ENCODE measurements at regions of chr5 and their contacts with region 1.

Region 1: DNA sequence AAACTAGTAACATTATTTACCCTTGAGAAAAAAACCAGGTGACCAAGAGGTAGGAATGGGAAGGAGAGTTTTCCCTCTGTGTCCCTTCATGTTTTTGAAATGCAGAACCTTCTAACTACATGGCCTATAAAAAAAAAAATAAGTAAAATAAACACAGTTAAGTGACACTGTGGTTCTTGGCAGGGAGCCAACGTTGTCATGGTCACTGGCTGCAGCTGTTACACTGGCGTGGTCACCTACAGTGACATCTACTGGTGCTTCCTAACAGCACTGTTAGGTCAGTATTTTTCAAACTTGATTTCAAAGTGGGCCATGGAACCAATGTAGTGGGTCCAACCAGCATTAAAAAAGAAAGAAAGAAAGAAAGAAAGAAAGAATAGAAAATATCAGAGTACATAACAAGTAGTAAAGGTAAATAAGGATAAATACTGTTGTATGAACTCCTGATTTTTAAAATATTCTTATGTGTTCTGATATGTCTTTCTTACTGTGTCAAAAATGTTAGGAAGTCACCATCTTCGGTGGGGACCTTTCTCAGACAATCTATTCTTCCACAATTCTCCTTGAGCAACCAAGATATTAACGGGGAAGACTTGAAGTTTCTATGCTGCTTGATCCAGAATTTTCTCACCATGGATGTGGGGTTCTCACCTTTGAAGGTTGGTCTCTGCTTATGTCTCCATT is 59.1 kb upstream of the PJA2 start:
- DNase-seq: peak; percentile 88
- ATAC-seq: peak; percentile 95
- H3K4me3 ChIP-seq: no peak overlapping the region
- H3K27ac ChIP-seq: no peak overlapping the region
- H3K4me1 ChIP-seq: peaks cover 7% of the 10 kb centered on the region
- H3K27me3 ChIP-seq: no peaks in the 10 kb centered on the region
- CTCF ChIP-seq: peak; percentile 87
- EP300 ChIP-seq: peak in 1 of 2 experiments; percentile 41; a peak in 1 of 4 replicates
- POLR2A ChIP-seq: no peak
- RAD21 ChIP-seq: peak; percentile 76

Region 2: DNA sequence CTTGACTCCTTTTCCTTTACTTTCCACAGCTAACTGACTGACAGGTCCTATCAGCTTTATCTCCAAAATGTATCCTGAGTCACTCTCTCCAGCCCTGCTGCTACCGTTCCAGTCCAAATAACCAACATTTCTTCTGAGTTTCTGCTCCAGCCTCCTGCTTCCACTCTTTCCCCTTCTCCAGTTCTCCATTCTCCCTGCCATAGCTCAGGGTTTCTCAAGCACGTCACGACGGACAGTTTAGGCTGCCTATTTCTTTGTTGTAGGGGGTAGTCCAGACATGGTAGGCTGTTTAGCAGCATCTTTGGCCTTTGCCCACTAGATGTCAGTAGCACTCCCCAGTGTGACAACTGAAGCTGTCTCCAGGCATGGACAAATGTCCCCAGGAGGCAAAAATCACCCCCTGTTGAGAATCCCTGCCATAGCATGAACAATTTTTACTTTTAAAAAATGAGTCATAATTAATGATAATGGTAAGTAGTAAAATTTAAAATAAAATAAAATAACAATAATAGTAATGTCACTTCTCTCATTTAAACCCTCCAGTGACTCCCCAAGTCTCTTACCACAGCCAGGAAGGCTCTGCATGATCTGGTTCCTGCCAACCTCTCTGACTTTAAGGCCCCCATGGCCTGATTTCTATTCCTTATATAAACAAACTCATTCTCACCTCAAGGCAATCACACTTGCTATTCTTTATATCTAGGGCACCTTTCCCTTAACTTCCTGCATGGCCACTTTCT is 826.5 kb before region 1 on chr5:
- CTCF ChIA-PET with region 1: no interaction called
- POLR2A ChIA-PET with region 1: no interaction called
- in situ Hi-C with region 1: no loop called
- intact Hi-C with region 1: loop called (anchors 5 kb)
- DNase-seq: peak; percentile 53
- ATAC-seq: peak; percentile 100
- H3K4me3 ChIP-seq: 0 out of 6 replicates have a peak overlapping the region, but pooled peaks of 1 of the 3 experiments have one; percentile 35
- H3K27ac ChIP-seq: no peak overlapping the region
- H3K4me1 ChIP-seq: peaks cover 5% of the 10 kb centered on the region; the same call in 1 of the 2 replicates
- H3K27me3 ChIP-seq: 0 out of 5 replicates have a peak, but pooled peaks cover 0 to 4% of the 10 kb centered on the region in 2 experiments
- CTCF ChIP-seq: peak; percentile 88
- EP300 ChIP-seq: no peak
- POLR2A ChIP-seq: no peak
- RAD21 ChIP-seq: peak; percentile 61; the same call in 1 of the 2 replicates

Region 3: GRCh38 chr5:108681079-108681921 is 787.6 kb before region 1 on chr5:
- CTCF ChIA-PET with region 1: interaction called, 5 read pairs
- POLR2A ChIA-PET with region 1: no interaction called
- in situ Hi-C with region 1: no loop called
- intact Hi-C with region 1: loop called (anchors 2 kb)
- DNase-seq: peak; percentile 50
- ATAC-seq: peak; percentile 78
- H3K4me3 ChIP-seq: no peak overlapping the region
- H3K27ac ChIP-seq: no peak overlapping the region
- H3K4me1 ChIP-seq: peaks cover 12% of the 10 kb centered on the region
- H3K27me3 ChIP-seq: no peaks in the 10 kb centered on the region; a peak in 1 of 5 replicates
- CTCF ChIP-seq: peak; percentile 78
- EP300 ChIP-seq: no peak
- POLR2A ChIP-seq: no peak
- RAD21 ChIP-seq: peak; percentile 65

Region 4: GRCh38 chr5:108919591-108920326 is 549.1 kb before region 1 on chr5:
- CTCF ChIA-PET with region 1: interaction called, 4 read pairs
- POLR2A ChIA-PET with region 1: no interaction called
- in situ Hi-C with region 1: loop called (anchors 10 kb)
- intact Hi-C with region 1: loop called (anchors 1 kb)
- DNase-seq: no peak
- ATAC-seq: no peak
- H3K4me3 ChIP-seq: no peak overlapping the region
- H3K27ac ChIP-seq: no peak overlapping the region
- H3K4me1 ChIP-seq: no peaks in the 10 kb centered on the region
- H3K27me3 ChIP-seq: no peaks in the 10 kb centered on the region; a peak in 1 of 5 replicates
- CTCF ChIP-seq: no peak
- EP300 ChIP-seq: no peak
- POLR2A ChIP-seq: no peak
- RAD21 ChIP-seq: no peak

Region 5: GRCh38 chr5:109225716-109226625 is 242.9 kb before region 1 on chr5:
- CTCF ChIA-PET with region 1: no interaction called
- POLR2A ChIA-PET with region 1: no interaction called
- in situ Hi-C with region 1: no loop called
- intact Hi-C with region 1: loop called (anchors 10 kb)
- DNase-seq: no peak
- ATAC-seq: no peak
- H3K4me3 ChIP-seq: no peak overlapping the region
- H3K27ac ChIP-seq: no peak overlapping the region
- H3K4me1 ChIP-seq: 0 out of 2 replicates have a peak, but pooled peaks cover 6% of the 10 kb centered on the region
- H3K27me3 ChIP-seq: peaks cover 3 to 20% of the 10 kb centered on the region in 2 experiments; a peak in 3 of 5 replicates
- CTCF ChIP-seq: no peak
- EP300 ChIP-seq: no peak
- POLR2A ChIP-seq: no peak
- RAD21 ChIP-seq: no peak

Region 6: DNA sequence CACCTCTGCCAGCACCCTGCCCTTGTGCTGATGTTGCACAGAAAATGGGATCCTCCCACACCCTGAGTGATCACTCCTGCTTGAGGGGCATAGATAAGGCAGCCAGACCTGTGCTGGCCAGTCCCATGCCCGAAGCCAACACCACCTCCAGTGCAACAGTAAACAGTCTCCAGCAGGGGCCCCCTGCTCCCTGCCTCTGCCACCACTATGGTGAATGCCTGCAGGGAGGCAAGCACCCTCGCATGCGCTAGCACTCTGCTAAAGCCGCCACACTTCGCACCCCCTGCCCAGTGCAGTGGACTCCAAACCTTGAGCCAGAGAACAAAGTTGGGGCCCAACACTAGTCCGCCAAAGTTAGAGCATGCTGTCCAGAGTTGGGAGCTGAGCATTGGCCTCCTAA is 177.8 kb before region 1 on chr5:
- CTCF ChIA-PET with region 1: no interaction called
- POLR2A ChIA-PET with region 1: no interaction called
- in situ Hi-C with region 1: no loop called
- intact Hi-C with region 1: loop called (anchors 5 kb)
- DNase-seq: no peak
- ATAC-seq: peak; percentile 99
- H3K4me3 ChIP-seq: no peak overlapping the region
- H3K27ac ChIP-seq: no peak overlapping the region
- H3K4me1 ChIP-seq: peaks cover 11% of the 10 kb centered on the region
- H3K27me3 ChIP-seq: no peaks in the 10 kb centered on the region
- CTCF ChIP-seq: peak; percentile 62
- EP300 ChIP-seq: no peak
- POLR2A ChIP-seq: no peak
- RAD21 ChIP-seq: peak; percentile 61

Region 7: DNA sequence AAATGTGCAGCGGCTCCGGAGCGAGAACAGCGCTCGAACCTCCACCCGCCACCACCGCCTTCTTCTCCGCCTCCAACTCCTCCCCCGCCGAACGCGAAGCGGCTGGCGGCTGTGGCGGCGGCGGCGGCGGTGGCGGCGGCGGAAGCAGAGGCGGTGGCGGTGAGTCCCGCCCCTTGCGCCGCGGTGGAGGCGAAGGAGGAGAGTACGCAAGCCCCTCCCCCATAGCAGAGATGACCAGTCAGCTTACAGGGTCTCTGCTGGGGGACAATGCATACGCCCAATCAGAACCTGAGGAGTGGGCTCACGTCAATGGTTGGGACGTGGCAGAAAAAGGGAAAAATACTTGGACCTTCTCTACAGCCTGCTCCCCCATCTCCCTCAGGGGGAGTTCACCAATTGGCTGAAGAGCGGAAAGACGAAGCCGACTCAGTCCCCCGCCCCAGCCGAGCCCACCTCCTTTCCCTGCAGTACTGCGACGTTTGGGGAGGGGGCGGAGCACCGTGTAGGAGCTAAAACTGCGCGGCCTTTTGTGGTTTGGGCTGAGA is 59.0 kb before region 1 on chr5 and contains the start of gene PJA2:
- CTCF ChIA-PET with region 1: no interaction called
- POLR2A ChIA-PET with region 1: no interaction called
- in situ Hi-C with region 1: no loop called
- intact Hi-C with region 1: loop called (anchors 5 kb)
- DNase-seq: peak; percentile 99
- ATAC-seq: peak; percentile 90
- H3K4me3 ChIP-seq: peak within 1 kb of the TSS; percentile 73 to 98 (median 97)
- H3K27ac ChIP-seq: peak within 1 kb of the TSS; percentile 98
- H3K4me1 ChIP-seq: peaks cover 59% of the 10 kb centered on the region
- H3K27me3 ChIP-seq: no peaks in the 10 kb centered on the region; a peak in 1 of 5 replicates
- CTCF ChIP-seq: no peak; the same call in 1 of the 2 replicates
- EP300 ChIP-seq: no peak; a peak in 1 of 4 replicates
- POLR2A ChIP-seq: peak in 1 of 2 experiments; percentile 55; a peak in 2 of 4 replicates
- RAD21 ChIP-seq: no peak
- total RNA-seq, gene PJA2: 39.4 and 70.7 TPM in 2 replicates

Region 8: GRCh38 chr5:109788596-109788995 is 319.7 kb after region 1 on chr5:
- CTCF ChIA-PET with region 1: no interaction called
- POLR2A ChIA-PET with region 1: no interaction called
- in situ Hi-C with region 1: no loop called
- intact Hi-C with region 1: no loop called
- DNase-seq: no peak
- ATAC-seq: no peak
- H3K4me3 ChIP-seq: no peak overlapping the region
- H3K27ac ChIP-seq: no peak overlapping the region
- H3K4me1 ChIP-seq: no peaks in the 10 kb centered on the region
- H3K27me3 ChIP-seq: no peaks in the 10 kb centered on the region
- CTCF ChIP-seq: no peak
- EP300 ChIP-seq: no peak
- POLR2A ChIP-seq: no peak
- RAD21 ChIP-seq: no peak

Measured in HepG2 (cell line).